PC-9 (cell line): ENCODE measurements at regions of chr1 and their contacts with region 1.

Region 1: DNA sequence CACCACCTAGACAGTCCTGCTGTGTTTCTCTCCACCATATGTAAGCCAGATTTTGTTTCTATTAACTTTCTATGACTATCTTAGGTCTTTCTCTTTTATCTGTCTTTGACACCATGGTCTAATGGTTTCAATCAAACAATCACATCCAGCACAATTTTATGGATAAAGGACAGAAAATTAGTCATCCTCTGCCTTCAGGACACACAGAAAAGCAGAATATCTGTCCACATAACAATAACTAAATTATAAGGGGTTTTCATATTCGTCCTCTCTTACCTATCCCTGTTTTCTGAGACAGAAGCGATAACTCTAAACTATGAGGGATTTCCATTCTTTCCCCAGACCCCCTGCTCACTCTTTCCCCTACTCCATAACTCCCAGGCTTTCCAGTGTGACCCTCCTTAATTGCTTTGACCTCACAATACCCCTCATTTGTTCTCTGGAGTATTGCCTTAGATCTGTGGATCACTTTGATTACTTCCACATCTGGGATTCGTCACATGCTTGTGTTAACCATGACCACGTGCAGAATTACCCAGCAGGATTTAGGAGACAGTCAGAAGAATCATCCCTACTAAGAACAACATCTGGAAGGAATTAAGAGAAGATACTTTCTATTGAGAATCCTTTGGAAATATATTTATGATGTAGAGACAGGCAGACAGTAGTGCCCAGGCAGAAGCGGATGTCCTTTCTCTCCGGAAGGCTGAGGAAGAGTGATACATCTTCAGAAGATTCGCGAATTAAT is 108.2 kb upstream of the GREM2 start:
- DNase-seq: no peak
- H3K4me3 ChIP-seq: no peak overlapping the region
- H3K27ac ChIP-seq: no peak overlapping the region
- H3K4me1 ChIP-seq: no peaks in the 10 kb centered on the region
- H3K27me3 ChIP-seq: peaks cover 39% of the 10 kb centered on the region
- CTCF ChIP-seq: no peak

Region 2: DNA sequence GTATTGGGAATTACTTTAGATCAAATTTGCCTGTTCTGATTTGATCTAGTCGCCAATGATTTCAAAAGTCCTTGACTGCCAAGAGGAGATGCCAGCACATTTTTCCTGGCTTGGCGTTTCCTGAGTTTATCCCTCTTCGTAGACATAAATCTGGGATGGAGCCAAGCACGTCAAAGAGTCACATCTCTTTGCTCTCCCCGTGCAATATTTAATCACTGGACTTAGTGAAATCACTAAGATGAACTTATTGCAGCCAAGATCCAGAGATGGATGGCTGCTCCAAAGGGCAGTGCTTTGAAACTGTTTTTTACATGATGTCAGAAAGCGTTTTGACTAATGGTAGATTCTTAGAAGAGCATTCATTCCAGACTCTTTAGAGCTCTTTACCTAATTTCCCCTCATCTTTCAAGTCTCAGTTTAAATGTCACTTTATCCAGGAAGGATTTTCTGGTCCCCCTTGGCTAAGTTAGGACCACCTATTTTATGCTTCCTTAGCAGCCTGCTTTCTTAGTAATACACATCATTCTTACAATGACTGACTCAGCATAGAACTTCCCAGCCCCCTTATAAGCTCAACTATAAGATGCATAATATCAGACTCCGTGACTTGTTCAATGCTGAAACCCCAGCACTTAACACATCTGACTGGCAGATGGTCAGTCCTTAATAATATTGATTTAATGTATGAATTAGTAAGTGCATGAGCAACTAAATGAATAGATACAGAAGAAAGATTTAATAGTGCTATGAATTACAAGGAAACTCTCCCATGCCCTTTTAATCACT is 13.8 kb before region 1 on chr1:
- CTCF ChIA-PET with region 1: interaction called, 11 read pairs
- POLR2A ChIA-PET with region 1: no interaction called
- intact Hi-C with region 1: no loop called
- DNase-seq: no peak
- H3K4me3 ChIP-seq: no peak overlapping the region
- H3K27ac ChIP-seq: no peak overlapping the region
- H3K4me1 ChIP-seq: no peaks in the 10 kb centered on the region
- H3K27me3 ChIP-seq: peaks cover 84% of the 10 kb centered on the region
- CTCF ChIP-seq: no peak